Stomach (tissue), 19 donors: ENCODE measurements at regions of chr1 and their contacts with region 1.

Region 1: GRCh38 chr1:160117709-160118183 is 2.2 kb downstream of the ATP1A2 start:
- DNase-seq: peak; percentile 32 to 84
- H3K4me3 ChIP-seq: peak overlapping the region in 3 of 4 donors; percentile 31 to 43 (median 41)
- H3K27ac ChIP-seq: peak overlapping the region in 3 of 5 donors; percentile 37 to 73 (median 73)
- H3K4me1 ChIP-seq: peaks cover 0 to 56% (median 23%) of the 10 kb centered on the region in 4 donors
- H3K27me3 ChIP-seq: peaks cover 0 to 30% (median 15%) of the 10 kb centered on the region in 3 donors
- CTCF ChIP-seq: no peak
- EP300 ChIP-seq: no peak
- POLR2A ChIP-seq: no peak

Region 2: DNA sequence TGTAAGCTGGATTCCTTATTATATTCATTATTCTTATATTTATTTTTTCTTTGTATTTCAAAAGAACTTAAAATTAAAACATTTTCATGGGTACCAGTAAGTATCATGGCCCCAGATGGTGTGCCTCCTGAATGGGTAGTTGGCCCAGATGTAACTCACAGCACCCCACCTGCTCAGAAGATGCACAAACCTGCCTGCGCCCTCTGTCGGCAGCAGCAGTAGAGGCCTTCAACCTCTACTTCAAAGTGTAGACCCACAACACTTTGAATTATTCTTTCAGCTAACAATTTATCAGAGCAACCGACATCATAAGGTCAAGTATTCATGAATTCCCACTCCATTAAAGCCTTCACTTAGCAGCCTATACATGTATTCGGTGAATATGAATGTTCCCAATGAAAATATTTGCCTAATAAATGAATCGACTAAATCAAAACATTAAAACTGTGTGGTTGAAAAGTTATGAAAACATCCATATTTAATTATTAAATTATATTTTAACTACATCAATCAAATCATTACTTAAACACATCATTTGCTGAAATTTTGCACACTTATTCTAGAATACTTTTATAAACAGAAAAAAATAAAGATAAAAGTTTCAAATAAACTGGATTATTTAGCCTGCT is 111.3 kb before region 1 on chr1:
- intact Hi-C with region 1: no loop called
- DNase-seq: peak; percentile 82 to 91
- H3K4me3 ChIP-seq: no peak overlapping the region
- H3K27ac ChIP-seq: no peak overlapping the region
- H3K4me1 ChIP-seq: no peaks in the 10 kb centered on the region
- H3K27me3 ChIP-seq: no peaks in the 10 kb centered on the region
- CTCF ChIP-seq: peak in 5 of 7 experiments; percentile 69 to 82 (median 75)
- EP300 ChIP-seq: no peak
- POLR2A ChIP-seq: no peak

Region 3: DNA sequence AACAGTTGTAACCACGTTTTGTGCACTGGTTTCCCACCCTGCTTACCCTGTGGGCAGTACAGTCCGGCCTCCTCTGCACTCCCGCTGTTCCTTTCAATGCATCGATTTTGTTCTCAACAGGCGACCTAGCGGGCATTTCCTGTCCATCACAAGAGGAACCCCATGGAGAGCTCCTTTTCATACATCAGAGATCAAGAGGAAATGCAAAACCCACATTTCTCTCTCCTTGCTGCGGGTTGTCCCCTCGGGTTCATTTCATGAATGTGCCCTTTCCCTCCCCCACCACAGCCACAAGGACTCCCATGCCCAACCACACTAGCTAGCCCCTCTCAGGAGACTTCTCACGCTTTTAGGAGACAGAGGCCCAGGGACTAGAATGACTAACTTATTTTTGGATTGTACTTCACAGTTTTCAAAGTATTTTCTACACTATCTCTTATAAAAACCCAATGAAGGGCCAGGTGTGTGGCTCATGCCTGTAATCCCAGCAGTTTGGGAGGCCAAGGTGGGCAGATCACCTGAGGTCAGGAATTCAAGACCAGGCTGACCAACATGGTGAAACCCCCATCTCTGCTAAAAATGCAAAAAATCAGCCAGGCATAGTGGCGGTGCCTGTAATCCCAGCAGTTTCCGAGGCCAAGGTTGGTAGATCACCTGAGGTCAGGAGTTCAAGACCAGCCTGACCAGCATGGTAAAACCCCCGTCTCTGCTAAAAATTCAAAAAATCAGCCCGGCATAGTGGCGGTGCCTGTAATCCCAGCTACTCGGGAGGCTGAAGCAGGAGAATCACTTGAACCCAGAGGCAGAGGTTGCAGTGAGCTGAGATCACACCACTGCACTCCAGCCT is 52.0 kb after region 1 on chr1:
- intact Hi-C with region 1: loop called (anchors 10 kb)
- DNase-seq: no peak
- H3K4me3 ChIP-seq: no peak overlapping the region
- H3K27ac ChIP-seq: no peak overlapping the region
- H3K4me1 ChIP-seq: no peaks in the 10 kb centered on the region
- H3K27me3 ChIP-seq: peaks cover 0 to 29% (median 0%) of the 10 kb centered on the region in 3 donors
- CTCF ChIP-seq: no peak
- EP300 ChIP-seq: no peak
- POLR2A ChIP-seq: no peak

Region 4: GRCh38 chr1:160309180-160309530 is 191.4 kb after region 1 on chr1:
- intact Hi-C with region 1: no loop called
- DNase-seq: no peak
- H3K4me3 ChIP-seq: no peak overlapping the region
- H3K27ac ChIP-seq: no peak overlapping the region
- H3K4me1 ChIP-seq: no peaks in the 10 kb centered on the region
- H3K27me3 ChIP-seq: no peaks in the 10 kb centered on the region
- CTCF ChIP-seq: no peak
- EP300 ChIP-seq: no peak
- POLR2A ChIP-seq: no peak

Region 5: GRCh38 chr1:160376525-160377131 is 258.9 kb after region 1 on chr1:
- intact Hi-C with region 1: no loop called
- DNase-seq: peak in 1 of 2 donors; percentile 87
- H3K4me3 ChIP-seq: no peak overlapping the region
- H3K27ac ChIP-seq: peak overlapping the region in 2 of 5 donors; percentile 7 to 35
- H3K4me1 ChIP-seq: peaks cover 4 to 24% (median 10%) of the 10 kb centered on the region in 4 donors
- H3K27me3 ChIP-seq: peaks cover 0 to 31% (median 0%) of the 10 kb centered on the region in 3 donors
- CTCF ChIP-seq: peak in 5 of 7 experiments; percentile 50 to 88 (median 80)
- EP300 ChIP-seq: no peak
- POLR2A ChIP-seq: no peak